SK-N-SH (cell line): ENCODE measurements at regions of chr15 and their contacts with region 1.

Region 1: DNA sequence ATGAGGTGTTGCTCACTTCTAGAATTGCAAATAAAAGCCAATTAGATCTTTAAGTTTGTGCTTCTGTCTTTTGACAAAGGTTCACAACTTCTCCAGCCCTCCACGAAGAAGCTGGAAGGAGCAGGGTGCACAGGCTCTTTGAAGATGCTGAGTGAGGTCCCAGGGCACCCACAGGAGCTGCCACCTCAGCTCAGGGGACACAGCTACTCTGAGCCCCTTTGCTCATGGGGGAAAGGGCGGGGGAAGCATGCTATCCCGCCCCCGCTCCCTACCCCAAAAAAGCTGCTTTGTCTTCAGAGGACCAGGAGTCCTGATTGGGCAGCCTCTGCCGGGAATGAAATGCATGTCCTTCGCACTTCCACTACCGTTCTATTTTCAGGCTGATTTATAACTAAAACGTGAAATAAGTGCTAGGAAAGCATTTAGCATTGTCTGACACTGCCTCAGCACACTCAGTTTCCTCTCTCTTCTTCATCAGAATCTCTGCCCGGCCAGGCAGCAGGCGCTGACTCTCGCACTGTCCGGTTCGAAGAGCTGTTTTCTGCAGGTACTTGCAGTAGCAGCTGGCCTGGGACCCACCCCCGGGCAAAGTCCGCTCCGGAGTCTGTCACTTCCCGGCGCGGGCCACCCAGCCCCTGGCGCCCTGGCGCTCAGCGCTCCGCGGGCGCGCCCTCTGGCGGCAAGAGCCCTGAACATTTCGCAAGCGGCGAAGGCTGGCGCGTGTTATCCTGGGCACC is 45.5 kb upstream of the KLHL25 start:
- DNase-seq: peak; percentile 91
- H3K4me3 ChIP-seq: peak overlapping the region; percentile 35 to 63
- H3K27ac ChIP-seq: no peak overlapping the region
- H3K4me1 ChIP-seq: peaks cover 0 to 5% of the 10 kb centered on the region in 2 experiments; a peak in 1 of 4 replicates
- H3K27me3 ChIP-seq: no peaks in the 10 kb centered on the region
- CTCF ChIP-seq: peak; percentile 89
- EP300 ChIP-seq: no peak
- RAD21 ChIP-seq: peak; percentile 76

Region 2: GRCh38 chr15:85296615-85297402 is 543.4 kb before region 1 on chr15:
- CTCF ChIA-PET with region 1: interaction called, 12 read pairs
- POLR2A ChIA-PET with region 1: no interaction called
- DNase-seq: peak; percentile 70
- H3K4me3 ChIP-seq: peak overlapping the region; percentile 13 to 28; a peak in 2 of 4 replicates
- H3K27ac ChIP-seq: no peak overlapping the region
- H3K4me1 ChIP-seq: no peaks in the 10 kb centered on the region; a peak in 1 of 4 replicates
- H3K27me3 ChIP-seq: no peaks in the 10 kb centered on the region
- CTCF ChIP-seq: peak; percentile 78
- EP300 ChIP-seq: no peak
- RAD21 ChIP-seq: peak; percentile 94

Region 3: DNA sequence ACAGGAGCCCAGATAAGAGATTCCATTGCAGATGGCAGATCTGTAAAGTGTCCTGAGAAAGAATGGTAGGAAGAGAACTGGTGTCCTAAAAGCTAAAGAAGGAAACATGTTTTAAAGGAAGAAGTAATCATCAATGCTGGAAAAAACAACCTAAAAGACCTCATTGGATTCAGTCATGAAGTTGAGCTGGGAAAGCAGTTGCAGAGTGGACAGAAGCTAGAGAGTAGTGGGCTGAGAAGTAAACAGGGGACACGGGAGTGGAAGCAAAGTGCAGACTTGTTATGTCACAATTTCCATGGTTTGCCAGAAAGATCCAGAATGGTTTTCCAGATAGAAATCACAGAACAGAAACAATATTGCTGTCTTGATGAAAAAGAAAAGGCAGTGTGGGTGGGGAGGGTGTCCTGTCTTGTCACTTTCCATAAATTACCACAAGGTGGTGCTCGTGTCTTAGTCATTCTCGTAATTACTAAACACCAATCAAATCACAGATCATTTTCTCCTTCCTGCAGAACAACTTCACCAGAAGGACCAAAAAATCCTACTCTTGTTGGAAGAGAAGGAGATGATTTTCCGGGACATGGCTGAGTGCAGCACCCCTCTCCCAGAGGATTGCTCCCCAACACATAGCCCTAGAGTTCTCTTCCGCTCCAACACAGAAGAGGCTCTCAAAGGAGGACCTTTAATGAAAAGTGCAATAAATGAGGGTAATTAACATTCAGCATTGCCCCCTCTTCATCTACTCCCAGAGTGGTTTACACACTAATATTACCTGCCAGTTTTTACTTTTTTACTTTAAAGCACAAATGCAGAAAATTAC is 110.0 kb before region 1 on chr15:
- CTCF ChIA-PET with region 1: interaction called, 201 read pairs
- POLR2A ChIA-PET with region 1: no interaction called
- DNase-seq: peak; percentile 73
- H3K4me3 ChIP-seq: no peak overlapping the region; a peak in 1 of 4 replicates
- H3K27ac ChIP-seq: peak overlapping the region in 1 of 2 experiments; percentile 17; a peak in 1 of 4 replicates
- H3K4me1 ChIP-seq: peaks cover 0 to 2% of the 10 kb centered on the region in 2 experiments; a peak in 1 of 4 replicates
- H3K27me3 ChIP-seq: no peaks in the 10 kb centered on the region
- CTCF ChIP-seq: peak; percentile 75
- EP300 ChIP-seq: no peak
- RAD21 ChIP-seq: peak; percentile 94

Region 4: GRCh38 chr15:85742186-85742821 is 97.9 kb before region 1 on chr15:
- CTCF ChIA-PET with region 1: interaction called, 17 read pairs
- POLR2A ChIA-PET with region 1: no interaction called
- DNase-seq: peak; percentile 32
- H3K4me3 ChIP-seq: no peak overlapping the region
- H3K27ac ChIP-seq: no peak overlapping the region
- H3K4me1 ChIP-seq: no peaks in the 10 kb centered on the region
- H3K27me3 ChIP-seq: no peaks in the 10 kb centered on the region
- CTCF ChIP-seq: no peak
- EP300 ChIP-seq: no peak
- RAD21 ChIP-seq: no peak

Region 5: DNA sequence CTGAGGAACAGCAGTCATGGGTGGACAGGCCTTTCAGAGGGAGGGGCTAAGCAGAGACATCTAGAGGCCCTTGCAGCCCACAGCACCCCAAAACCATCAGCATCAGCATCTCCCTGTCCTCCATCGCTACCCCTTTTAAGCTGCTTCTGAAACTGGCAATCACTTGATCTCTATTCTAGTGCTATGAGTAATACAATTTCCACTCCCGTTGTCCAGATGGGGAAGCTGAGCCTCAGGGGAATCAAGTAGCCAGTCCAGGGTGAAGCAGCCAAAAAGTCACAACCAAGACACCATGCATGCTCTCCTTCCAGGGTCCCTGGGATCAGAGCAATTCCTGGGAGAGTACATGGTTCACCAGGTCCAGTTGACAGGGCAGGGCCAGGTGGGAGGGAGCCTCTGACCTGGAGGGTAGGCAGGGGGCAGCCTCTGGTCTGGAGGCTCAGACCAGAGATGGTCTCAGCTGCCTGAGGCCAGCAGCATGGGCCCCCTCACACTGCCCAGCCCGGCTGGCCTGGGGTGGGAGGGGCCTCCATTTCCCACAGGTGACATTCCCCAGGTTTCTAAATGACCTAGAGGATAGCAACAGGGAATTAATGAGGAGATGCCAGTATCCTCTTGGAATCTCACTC is 75.5 kb before region 1 on chr15:
- CTCF ChIA-PET with region 1: interaction called, 11 read pairs
- POLR2A ChIA-PET with region 1: no interaction called
- DNase-seq: peak; percentile 73
- H3K4me3 ChIP-seq: no peak overlapping the region
- H3K27ac ChIP-seq: peak overlapping the region in 1 of 2 experiments; percentile 86; a peak in 2 of 4 replicates
- H3K4me1 ChIP-seq: peaks cover 5 to 38% of the 10 kb centered on the region in 2 experiments; a peak in 2 of 4 replicates
- H3K27me3 ChIP-seq: no peaks in the 10 kb centered on the region
- CTCF ChIP-seq: no peak
- EP300 ChIP-seq: no peak
- RAD21 ChIP-seq: no peak

Region 6: DNA sequence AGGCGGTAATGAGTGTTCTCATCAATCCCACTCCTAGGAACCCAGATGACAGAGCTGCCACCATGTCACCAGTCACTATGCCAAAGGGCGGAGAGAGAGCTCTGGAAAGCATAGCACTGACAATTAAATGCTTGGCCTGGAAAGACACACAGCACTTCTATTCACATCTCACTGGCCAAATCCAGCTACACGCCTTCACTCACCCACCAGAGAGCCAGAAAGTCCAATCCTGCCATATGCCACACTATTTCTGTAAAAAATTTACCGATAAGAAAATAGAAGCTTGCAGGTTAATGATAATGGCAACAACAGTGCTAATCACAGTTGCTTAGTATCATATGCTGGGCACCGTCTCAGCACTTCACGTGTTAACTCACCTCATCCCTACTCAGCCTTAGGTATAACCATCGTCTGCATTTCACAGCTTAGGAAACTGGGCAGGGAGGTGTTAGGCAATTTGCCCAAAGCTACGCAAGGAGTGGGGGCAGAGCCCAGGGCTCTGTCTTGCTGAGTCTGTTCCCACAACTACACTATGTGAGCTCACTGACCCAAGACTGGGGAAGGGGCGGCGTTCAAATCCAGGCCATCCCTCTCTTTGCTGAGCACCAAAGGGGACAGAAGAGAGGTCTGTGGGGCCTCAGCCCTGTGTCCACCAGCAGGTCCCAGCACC is 62.0 kb before region 1 on chr15:
- CTCF ChIA-PET with region 1: interaction called, 10 read pairs
- POLR2A ChIA-PET with region 1: no interaction called
- DNase-seq: no peak
- H3K4me3 ChIP-seq: no peak overlapping the region
- H3K27ac ChIP-seq: peak overlapping the region in 1 of 2 experiments; percentile 53; a peak in 2 of 4 replicates
- H3K4me1 ChIP-seq: peaks cover 0 to 42% of the 10 kb centered on the region in 2 experiments; a peak in 1 of 4 replicates
- H3K27me3 ChIP-seq: no peaks in the 10 kb centered on the region
- CTCF ChIP-seq: no peak
- EP300 ChIP-seq: no peak
- RAD21 ChIP-seq: no peak